ENCODE measurements at regions of chr2 and their contacts with region 1.

Region 1: DNA sequence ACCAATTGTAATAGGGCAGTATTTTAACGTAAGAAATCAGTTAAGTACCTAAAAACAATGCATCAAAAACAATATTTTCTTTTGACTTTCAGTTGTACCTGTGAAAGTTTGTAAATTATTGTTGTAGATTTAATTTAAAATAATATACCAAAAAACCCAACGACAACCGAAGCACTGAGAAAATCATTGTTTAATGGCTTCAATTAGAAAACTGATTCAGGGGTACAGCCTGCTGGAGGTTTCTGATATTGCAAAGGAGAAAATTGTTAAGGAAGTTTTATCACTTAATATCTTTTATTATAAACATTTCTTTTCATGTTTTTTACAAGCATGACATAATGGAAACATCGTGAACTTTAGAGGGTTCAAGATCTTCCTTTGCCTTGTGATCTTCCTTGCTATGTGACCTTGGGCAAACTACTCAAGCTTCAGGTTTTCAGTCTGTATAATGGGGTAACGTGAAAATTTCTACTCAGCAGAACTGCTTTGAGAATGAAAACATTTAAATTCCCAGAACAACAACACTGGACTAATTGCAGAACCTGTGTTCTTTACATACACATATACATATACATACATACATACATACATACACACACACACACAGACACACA is 76.3 kb upstream of the GLS start:
- DNase-seq: peak in 2 of 9 experiments; percentile 22 to 33
- ATAC-seq: no peak
- H3K4me3 ChIP-seq: no peak overlapping the region
- H3K4me3 Mint-ChIP-seq: no peak overlapping the region
- H3K27ac ChIP-seq: no peak overlapping the region
- H3K27ac Mint-ChIP-seq: no peak overlapping the region
- H3K4me1 ChIP-seq: no peaks in the 10 kb centered on the region
- H3K4me1 Mint-ChIP-seq: no peaks in the 10 kb centered on the region
- H3K27me3 ChIP-seq: no peaks in the 10 kb centered on the region
- H3K27me3 Mint-ChIP-seq: no peaks in the 10 kb centered on the region
- CTCF ChIP-seq: peak; percentile 72

Region 2: DNA sequence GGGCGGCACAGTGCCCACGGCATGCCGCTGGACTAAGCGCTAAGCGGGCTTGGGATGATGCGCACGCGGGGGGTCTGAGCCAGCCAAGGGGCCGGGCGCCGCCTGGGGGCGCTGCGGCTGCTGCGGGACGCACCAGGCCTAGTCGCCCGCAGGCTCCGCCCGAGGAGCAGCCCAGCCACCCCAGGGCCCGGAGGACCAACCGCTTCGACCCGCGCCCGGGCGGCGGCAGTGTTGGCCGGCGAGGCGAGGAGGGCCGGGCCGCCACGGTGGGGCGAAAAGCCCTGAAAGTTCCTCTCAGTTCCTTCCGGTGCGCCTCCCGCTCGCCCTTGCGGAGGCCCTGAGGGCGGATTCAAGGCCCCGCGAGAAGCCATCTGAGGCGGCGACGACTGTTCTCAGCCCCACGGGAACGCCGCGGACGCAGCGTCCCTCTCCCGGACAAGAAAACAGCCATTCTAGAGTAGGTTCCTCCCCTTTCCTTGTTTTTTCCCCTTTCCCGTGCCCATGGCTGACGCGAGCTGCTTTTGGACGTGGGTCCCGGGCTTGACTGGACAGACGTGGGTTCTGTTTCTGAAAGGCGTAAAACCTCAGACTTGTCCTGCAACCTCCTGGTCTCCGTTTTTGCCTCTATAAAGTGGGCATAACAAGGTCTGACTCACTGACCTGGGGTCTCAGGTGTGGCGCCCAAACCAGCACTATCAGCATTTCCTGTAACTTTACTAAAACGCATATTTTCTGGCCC is 1129.7 kb before region 1 on chr2 and contains the start of gene ANKAR:
- CTCF ChIA-PET with region 1: no interaction called
- POLR2A ChIA-PET with region 1: no interaction called
- intact Hi-C with region 1: loop called in 1 of 2 experiments (anchors 10 kb)
- DNase-seq: peak; percentile 64 to 91 (median 79)
- ATAC-seq: peak; percentile 91
- H3K4me3 ChIP-seq: peak within 1 kb of the TSS; percentile 81 to 88
- H3K4me3 Mint-ChIP-seq: peak within 1 kb of the TSS; percentile 91
- H3K27ac ChIP-seq: peak within 1 kb of the TSS; percentile 86 to 97
- H3K27ac Mint-ChIP-seq: peak within 1 kb of the TSS; percentile 99
- H3K4me1 ChIP-seq: peaks cover 11% of the 10 kb centered on the region
- H3K4me1 Mint-ChIP-seq: peaks cover 49% of the 10 kb centered on the region
- H3K27me3 ChIP-seq: no peaks in the 10 kb centered on the region
- H3K27me3 Mint-ChIP-seq: no peaks in the 10 kb centered on the region
- CTCF ChIP-seq: peak; percentile 72
- total RNA-seq, gene ANKAR: 7.3 to 9.2 TPM

Region 3: DNA sequence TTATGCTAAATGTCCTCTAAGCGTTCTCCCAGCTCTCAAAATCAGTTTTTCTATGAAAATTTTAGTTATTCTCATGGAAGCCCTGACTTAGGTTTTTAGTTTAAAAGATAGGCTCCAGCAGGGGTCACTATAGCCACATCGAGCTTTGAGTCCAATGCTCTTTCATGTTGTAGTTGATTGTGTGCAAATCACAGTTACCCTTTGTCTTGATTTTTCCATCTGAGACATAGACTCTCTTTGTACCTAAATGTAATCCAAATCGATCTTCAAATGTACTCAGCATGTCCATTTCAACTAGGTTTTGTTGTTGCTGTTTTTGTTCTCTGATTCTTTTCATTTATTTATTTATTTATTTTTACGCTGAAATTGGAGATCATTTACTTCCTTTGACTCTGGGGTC is 715.4 kb before region 1 on chr2:
- CTCF ChIA-PET with region 1: no interaction called
- POLR2A ChIA-PET with region 1: no interaction called
- intact Hi-C with region 1: loop called in 1 of 2 experiments (anchors 2 kb)
- DNase-seq: peak in 6 of 9 experiments; percentile 4 to 66 (median 30)
- ATAC-seq: peak; percentile 42
- H3K4me3 ChIP-seq: no peak overlapping the region
- H3K4me3 Mint-ChIP-seq: no peak overlapping the region
- H3K27ac ChIP-seq: no peak overlapping the region
- H3K27ac Mint-ChIP-seq: no peak overlapping the region
- H3K4me1 ChIP-seq: no peaks in the 10 kb centered on the region
- H3K4me1 Mint-ChIP-seq: no peaks in the 10 kb centered on the region
- H3K27me3 ChIP-seq: no peaks in the 10 kb centered on the region
- H3K27me3 Mint-ChIP-seq: no peaks in the 10 kb centered on the region
- CTCF ChIP-seq: peak; percentile 30

Region 4: DNA sequence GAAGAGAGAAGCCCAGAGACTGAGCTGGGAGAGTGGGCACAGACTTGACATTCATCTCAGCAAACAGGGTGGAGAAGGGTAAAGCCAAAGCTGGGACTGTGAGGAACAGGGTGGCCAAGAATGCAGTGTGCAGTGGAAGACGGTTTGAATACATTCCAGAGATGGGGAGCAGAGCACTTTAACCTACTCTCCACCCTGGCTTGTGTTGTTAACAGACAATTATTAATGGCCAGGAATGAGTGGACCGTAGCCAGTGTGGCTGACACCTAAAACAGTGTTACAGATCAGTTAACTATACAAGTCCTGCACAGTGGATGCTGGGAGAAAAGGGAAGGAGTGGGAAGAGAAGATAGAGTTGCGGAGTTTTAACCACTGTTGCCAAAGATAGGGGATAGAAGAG is 162.8 kb before region 1 on chr2:
- CTCF ChIA-PET with region 1: no interaction called
- POLR2A ChIA-PET with region 1: no interaction called
- intact Hi-C with region 1: loop called in 1 of 2 experiments (anchors 5 kb)
- DNase-seq: no peak
- ATAC-seq: no peak
- H3K4me3 ChIP-seq: no peak overlapping the region
- H3K4me3 Mint-ChIP-seq: no peak overlapping the region
- H3K27ac ChIP-seq: no peak overlapping the region
- H3K27ac Mint-ChIP-seq: no peak overlapping the region
- H3K4me1 ChIP-seq: no peaks in the 10 kb centered on the region
- H3K4me1 Mint-ChIP-seq: peaks cover 9% of the 10 kb centered on the region
- H3K27me3 ChIP-seq: no peaks in the 10 kb centered on the region
- H3K27me3 Mint-ChIP-seq: no peaks in the 10 kb centered on the region
- CTCF ChIP-seq: no peak

Region 5: GRCh38 chr2:191811807-191812602 is 1007.7 kb after region 1 on chr2:
- CTCF ChIA-PET with region 1: no interaction called
- POLR2A ChIA-PET with region 1: no interaction called
- intact Hi-C with region 1: loop called in 1 of 2 experiments (anchors 5 kb)
- DNase-seq: peak in 4 of 9 experiments; percentile 1 to 44 (median 28)
- ATAC-seq: peak; percentile 26
- H3K4me3 ChIP-seq: no peak overlapping the region
- H3K4me3 Mint-ChIP-seq: no peak overlapping the region
- H3K27ac ChIP-seq: no peak overlapping the region
- H3K27ac Mint-ChIP-seq: no peak overlapping the region
- H3K4me1 ChIP-seq: no peaks in the 10 kb centered on the region
- H3K4me1 Mint-ChIP-seq: no peaks in the 10 kb centered on the region
- H3K27me3 ChIP-seq: no peaks in the 10 kb centered on the region
- H3K27me3 Mint-ChIP-seq: peaks cover 6% of the 10 kb centered on the region
- CTCF ChIP-seq: peak; percentile 38

Measured in CD8-positive, alpha-beta T cell (primary cell).